AG04449 (cell line): ENCODE measurements at regions of chr4 and their contacts with region 1.

Region 1: DNA sequence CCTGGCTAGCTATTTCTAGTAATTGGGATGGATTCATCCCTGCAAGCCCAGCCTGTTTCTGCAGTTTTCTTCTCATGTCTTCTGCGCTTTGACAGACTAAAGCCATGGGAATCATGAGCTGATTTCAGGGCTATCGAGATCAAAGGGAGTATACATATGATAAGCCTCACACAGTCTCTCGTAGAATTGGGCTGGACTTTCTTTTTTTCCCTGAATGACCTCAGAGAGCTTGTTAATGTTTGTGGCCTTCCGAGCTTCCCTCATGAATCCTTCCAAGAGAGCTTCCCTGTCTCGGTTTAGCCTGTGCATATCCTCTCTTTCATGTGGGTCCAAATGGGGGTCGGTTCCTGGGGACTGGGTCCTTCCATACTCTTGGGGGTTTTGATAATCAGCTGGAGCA is 130.3 kb downstream of the ADRA2C start:
- DNase-seq: no peak
- H3K4me3 ChIP-seq: no peak overlapping the region
- CTCF ChIP-seq: no peak

Region 2: DNA sequence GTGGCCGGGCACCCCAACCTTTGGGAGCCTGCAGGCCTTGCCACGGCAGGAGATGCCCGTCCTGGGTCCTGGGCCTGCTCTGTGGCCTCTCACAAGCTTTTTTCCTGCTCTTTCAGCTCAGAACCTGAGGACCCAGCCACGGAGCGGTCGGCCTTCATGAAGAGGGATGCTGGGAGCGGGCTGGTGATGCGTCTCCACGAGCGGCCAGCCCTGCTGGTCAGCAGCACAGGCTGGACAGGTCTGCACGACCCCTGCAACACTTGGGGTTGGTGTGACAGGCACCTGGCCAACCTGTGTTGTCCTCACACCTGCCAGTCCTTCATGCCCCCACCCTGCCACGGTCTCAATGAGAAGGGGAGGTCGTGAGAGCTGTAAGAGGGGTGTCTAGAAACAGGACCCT is 39.7 kb after region 1 on chr4:
- CTCF ChIA-PET with region 1: interaction called, 27 read pairs
- POLR2A ChIA-PET with region 1: no interaction called
- DNase-seq: no peak
- H3K4me3 ChIP-seq: no peak overlapping the region
- CTCF ChIP-seq: no peak